ENCODE measurements at regions of chr17 and their contacts with region 1.

Region 1: GRCh38 chr17:8409966-8410864 is 12.6 kb upstream of the RNF222 start:
- DNase-seq: peak; percentile 96

Region 2: GRCh38 chr17:8766731-8767130 is 356.5 kb after region 1 on chr17:
- intact Hi-C with region 1: loop called in 1 of 2 experiments (anchors 10 kb)
- DNase-seq: no peak

Region 3: DNA sequence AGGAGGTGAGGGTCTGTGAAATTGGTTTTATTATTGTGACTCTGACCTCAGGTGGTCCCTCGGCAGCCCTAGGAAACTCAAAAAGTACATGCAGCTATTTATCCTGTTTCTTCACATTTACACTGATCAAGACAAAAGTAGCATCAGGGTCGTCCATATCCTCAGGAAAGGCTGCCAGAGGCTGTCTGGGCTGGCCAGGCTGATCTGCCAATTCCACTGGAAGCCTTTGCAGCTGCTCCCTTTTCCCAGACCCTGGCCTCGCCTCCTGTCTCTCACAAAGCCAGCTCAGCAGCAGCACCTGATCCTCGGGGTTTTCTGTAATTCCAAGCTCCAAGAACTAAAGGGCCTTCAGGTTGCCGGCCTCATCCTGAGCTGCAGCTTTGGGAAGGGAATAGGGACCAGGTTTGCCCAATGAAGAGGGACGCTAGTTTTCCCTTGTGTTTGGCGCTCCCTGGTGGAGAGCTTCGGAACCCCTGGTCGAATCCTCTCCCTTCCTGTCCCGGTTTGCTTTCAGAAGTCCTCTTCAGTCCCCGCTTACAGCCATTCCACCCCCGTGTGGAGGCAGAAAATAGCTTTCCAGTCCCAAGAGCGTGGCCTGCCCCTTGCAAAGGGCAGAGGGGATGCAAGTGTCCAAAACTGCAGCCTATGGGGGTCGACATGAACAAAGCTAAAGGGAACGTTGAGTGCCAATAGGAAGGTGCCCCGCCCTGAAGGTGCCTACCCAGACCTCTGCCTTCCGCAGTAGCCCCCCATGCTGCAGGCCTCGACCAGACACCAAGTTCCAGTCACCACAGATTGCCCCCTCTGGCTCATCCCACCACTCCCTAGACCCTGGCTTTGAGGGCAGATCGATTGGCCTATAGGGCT is 375.6 kb after region 1 on chr17:
- intact Hi-C with region 1: loop called in 1 of 2 experiments (anchors 5 kb)
- DNase-seq: peak; percentile 95